ENCODE measurements at regions of chr1 and their contacts with region 1.

Region 1: DNA sequence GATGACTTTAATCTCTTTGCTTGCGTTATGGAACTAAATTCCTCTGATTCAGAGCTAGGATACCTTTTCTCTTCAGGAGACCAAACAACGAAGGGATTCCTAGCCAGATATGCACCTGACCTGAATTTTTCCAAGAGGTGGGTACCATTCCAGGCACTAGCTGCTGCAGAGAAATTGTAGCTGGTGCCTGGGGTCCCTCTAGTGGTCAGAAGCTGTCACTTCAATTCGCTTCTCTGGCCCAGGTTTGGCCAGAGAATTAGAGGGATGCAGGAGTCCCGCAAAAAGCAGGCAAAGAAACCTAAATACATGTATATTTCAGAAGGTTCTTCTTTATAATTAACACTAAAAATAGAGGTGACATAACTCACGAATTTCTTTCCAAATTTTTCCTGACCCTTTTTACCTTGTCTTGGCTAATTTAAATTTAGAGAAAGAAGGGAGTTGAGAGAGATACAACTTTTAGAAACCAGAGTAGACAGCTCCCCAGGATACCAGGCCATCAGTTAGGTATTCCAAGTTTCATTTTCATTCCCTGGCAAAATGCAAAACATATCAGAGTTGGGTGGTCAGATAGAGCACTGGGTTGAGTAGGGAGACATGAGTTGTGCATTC is 9.6 kb downstream of the ACKR1 start:
- DNase-seq: peak; percentile 65
- H3K4me3 ChIP-seq: peak overlapping the region in 1 of 2 experiments; percentile 39; a peak in 1 of 4 replicates
- H3K27ac ChIP-seq: no peak overlapping the region
- H3K4me1 ChIP-seq: no peaks in the 10 kb centered on the region
- H3K27me3 ChIP-seq: peaks cover 15% of the 10 kb centered on the region; the same call in 1 of the 2 replicates
- CTCF ChIP-seq: peak; percentile 94
- EP300 ChIP-seq: no peak
- RAD21 ChIP-seq: peak; percentile 70

Region 2: DNA sequence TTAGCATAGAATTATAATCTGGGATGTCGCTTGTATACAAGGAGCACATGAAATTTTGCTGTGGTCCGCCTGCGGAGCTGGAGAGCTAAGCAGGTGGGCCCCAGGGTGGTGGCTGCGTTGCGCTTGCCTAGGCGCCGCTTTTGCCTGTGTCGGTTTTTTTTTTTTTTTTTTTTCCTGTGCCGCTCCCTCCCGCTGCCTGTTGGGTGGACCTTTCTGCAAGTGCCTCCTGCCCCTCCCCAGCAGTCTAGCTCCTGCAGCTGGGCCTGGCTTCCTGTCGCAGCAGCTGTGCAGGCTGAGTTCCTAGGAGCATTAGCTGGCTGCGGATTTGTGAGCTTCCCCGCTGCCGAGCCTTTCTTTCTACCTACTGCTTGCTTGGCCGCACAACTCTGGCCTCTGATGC is 262.3 kb before region 1 on chr1:
- CTCF ChIA-PET with region 1: no interaction called
- POLR2A ChIA-PET with region 1: no interaction called
- DNase-seq: no peak
- H3K4me3 ChIP-seq: no peak overlapping the region
- H3K27ac ChIP-seq: no peak overlapping the region
- H3K4me1 ChIP-seq: no peaks in the 10 kb centered on the region
- H3K27me3 ChIP-seq: peaks cover 6% of the 10 kb centered on the region; the same call in 1 of the 2 replicates
- CTCF ChIP-seq: no peak
- EP300 ChIP-seq: no peak
- RAD21 ChIP-seq: no peak

Region 3: GRCh38 chr1:159152031-159152430 is 62.2 kb before region 1 on chr1:
- CTCF ChIA-PET with region 1: interaction called, 51 read pairs
- POLR2A ChIA-PET with region 1: no interaction called
- DNase-seq: no peak
- H3K4me3 ChIP-seq: no peak overlapping the region
- H3K27ac ChIP-seq: no peak overlapping the region
- H3K4me1 ChIP-seq: no peaks in the 10 kb centered on the region
- H3K27me3 ChIP-seq: peaks cover 5% of the 10 kb centered on the region; the same call in 1 of the 2 replicates
- CTCF ChIP-seq: no peak
- EP300 ChIP-seq: no peak
- RAD21 ChIP-seq: no peak

Region 4: GRCh38 chr1:159177273-159177907 is 36.9 kb before region 1 on chr1:
- CTCF ChIA-PET with region 1: interaction called, 660 read pairs
- POLR2A ChIA-PET with region 1: no interaction called
- DNase-seq: no peak
- H3K4me3 ChIP-seq: no peak overlapping the region
- H3K27ac ChIP-seq: no peak overlapping the region
- H3K4me1 ChIP-seq: peaks cover 0 to 7% of the 10 kb centered on the region in 2 experiments; a peak in 1 of 4 replicates
- H3K27me3 ChIP-seq: peaks cover 6% of the 10 kb centered on the region; the same call in 1 of the 2 replicates
- CTCF ChIP-seq: no peak
- EP300 ChIP-seq: no peak
- RAD21 ChIP-seq: no peak

Region 5: GRCh38 chr1:159229486-159229885 is 15.2 kb after region 1 on chr1:
- CTCF ChIA-PET with region 1: interaction called, 161 read pairs
- POLR2A ChIA-PET with region 1: no interaction called
- DNase-seq: peak; percentile 62
- H3K4me3 ChIP-seq: no peak overlapping the region
- H3K27ac ChIP-seq: peak overlapping the region; percentile 21 to 75; a peak in 3 of 4 replicates
- H3K4me1 ChIP-seq: peaks cover 0 to 13% of the 10 kb centered on the region in 2 experiments; a peak in 2 of 4 replicates
- H3K27me3 ChIP-seq: no peaks in the 10 kb centered on the region; the same call in 1 of the 2 replicates
- CTCF ChIP-seq: no peak
- EP300 ChIP-seq: no peak
- RAD21 ChIP-seq: no peak